ENCODE measurements at regions of chr5 and their contacts with region 1.

Region 1: DNA sequence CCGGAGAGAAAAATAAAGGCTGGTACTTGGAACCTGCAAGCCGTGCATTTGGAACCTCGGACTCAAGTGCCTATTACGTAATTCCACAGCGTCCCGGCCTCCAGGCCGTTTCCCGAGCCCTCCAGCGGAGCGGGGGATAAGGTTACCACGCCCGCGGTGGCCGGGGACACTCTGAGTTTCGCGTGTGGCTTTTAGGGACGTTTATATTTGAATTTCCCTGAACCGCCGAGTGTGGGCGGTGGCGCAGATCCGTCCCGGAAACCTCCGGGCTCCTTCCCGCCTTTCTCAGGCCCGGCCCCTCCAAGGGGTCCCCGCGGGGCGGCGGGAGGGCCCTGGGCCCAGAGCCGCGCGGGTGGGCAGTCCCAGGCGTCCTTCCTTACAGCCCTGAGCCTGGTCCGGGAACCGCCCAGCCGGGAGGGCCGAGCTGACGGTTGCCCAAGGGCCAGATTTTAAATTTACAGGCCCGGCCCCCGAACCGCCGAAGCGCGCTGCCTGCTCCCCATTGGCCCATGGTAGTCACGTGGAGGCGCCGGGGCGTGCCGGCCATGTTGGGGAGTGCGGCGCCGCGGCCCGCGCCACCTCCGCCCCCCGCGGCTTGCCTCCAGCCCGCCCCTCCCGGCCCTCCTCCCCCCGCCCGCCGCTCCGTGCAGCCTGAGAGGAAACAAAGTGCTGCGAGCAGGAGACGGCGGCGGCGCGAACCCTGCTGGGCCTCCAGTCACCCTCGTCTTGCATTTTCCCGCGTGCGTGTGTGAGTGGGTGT is at the start of gene LMNB1:
- H3K4me3 Mint-ChIP-seq: peak within 1 kb of the TSS; percentile 93
- H3K27ac Mint-ChIP-seq: peak within 1 kb of the TSS; percentile 98
- H3K4me1 Mint-ChIP-seq: peaks cover 32% of the 10 kb centered on the region
- H3K27me3 Mint-ChIP-seq: no peaks in the 10 kb centered on the region

Region 2: GRCh38 chr5:126676195-126676624 is 100.5 kb before region 1 on chr5:
- intact Hi-C with region 1: loop called (anchors 1 kb)
- H3K4me3 Mint-ChIP-seq: no peak overlapping the region
- H3K27ac Mint-ChIP-seq: no peak overlapping the region
- H3K4me1 Mint-ChIP-seq: peaks cover 36% of the 10 kb centered on the region
- H3K27me3 Mint-ChIP-seq: no peaks in the 10 kb centered on the region

Region 3: GRCh38 chr5:126745259-126745992 is 31.3 kb before region 1 on chr5:
- intact Hi-C with region 1: loop called (anchors 5 kb)
- H3K4me3 Mint-ChIP-seq: no peak overlapping the region
- H3K27ac Mint-ChIP-seq: no peak overlapping the region
- H3K4me1 Mint-ChIP-seq: peaks cover 21% of the 10 kb centered on the region
- H3K27me3 Mint-ChIP-seq: no peaks in the 10 kb centered on the region

Region 4: DNA sequence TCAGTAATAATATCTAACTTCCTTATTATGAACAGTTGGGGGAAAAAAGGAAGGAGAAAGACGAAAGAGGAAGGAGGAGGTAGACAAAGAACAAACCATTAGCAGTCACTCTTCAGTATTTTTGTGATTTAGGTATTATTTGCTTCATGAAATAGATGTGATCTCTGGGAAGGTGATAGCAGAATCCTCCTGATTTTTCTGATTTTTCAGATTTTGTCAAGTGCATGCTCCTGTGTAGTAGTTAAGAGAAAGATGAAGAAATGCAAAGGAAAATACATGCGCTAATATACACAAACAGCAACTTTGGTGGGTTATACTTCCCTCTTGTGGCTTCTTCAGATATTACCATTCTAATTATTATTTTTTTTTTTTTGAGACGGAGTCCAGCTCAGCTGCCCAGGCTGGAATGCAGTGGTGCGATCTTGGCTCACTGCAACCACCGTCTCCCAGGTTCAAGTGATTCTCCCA is 31.9 kb after region 1 on chr5:
- intact Hi-C with region 1: loop called (anchors 5 kb)
- H3K4me3 Mint-ChIP-seq: peak overlapping the region; percentile 76
- H3K27ac Mint-ChIP-seq: peak overlapping the region; percentile 82
- H3K4me1 Mint-ChIP-seq: peaks cover 37% of the 10 kb centered on the region
- H3K27me3 Mint-ChIP-seq: no peaks in the 10 kb centered on the region

Measured in dendritic cell treated with granulocyte-macrophage colony-stimulating factor and Interleukin-4, amounts not matched to agents 40 ng/mL and 50 ng/mL, for 4 days (primary cell).